ENCODE measurements at regions of chr12 and their contacts with region 1.

Region 1: GRCh38 chr12:15584366-15585041 is 204.7 kb downstream of the EPS8 start:
- DNase-seq: peak; percentile 37
- ATAC-seq: no peak
- H3K4me3 ChIP-seq: no peak overlapping the region
- H3K27ac ChIP-seq: no peak overlapping the region
- H3K4me1 ChIP-seq: peaks cover 18% of the 10 kb centered on the region
- H3K27me3 ChIP-seq: no peaks in the 10 kb centered on the region; a peak in 1 of 5 replicates
- CTCF ChIP-seq: peak; percentile 64
- EP300 ChIP-seq: no peak
- POLR2A ChIP-seq: no peak
- RAD21 ChIP-seq: peak; percentile 24; the same call in 1 of the 2 replicates

Region 2: DNA sequence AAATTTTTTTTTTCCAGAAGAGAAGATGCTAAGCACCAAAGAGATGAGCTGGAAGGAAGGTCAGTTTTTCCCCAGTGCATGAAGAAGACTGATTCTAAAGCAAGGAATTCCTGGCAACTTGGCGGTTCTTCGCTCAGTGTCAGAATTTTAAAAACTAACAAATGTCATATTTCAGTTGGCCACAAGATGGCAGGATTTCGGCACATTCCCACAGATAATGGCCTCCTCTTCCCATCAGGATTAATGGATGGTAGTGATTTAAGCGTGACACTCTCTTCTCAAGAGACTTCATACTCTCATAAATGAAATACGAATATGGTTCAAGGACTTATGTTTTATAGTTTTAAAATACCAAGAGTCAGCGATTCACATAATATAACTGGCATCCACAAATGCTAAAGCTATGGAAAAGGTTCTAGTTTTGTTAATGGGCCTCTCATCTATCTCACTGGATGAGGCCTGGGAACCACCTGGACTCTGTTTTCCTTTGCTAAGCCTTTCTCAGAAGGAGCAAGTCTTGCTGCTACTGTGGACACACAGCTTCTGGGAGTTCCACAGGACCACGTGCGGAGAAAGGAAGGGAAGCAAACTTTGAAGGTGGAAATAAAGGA is 308.3 kb before region 1 on chr12:
- CTCF ChIA-PET with region 1: interaction called, 4 read pairs
- POLR2A ChIA-PET with region 1: no interaction called
- in situ Hi-C with region 1: no loop called
- intact Hi-C with region 1: loop called (anchors 1 kb)
- DNase-seq: peak; percentile 11
- ATAC-seq: peak; percentile 79
- H3K4me3 ChIP-seq: no peak overlapping the region
- H3K27ac ChIP-seq: no peak overlapping the region
- H3K4me1 ChIP-seq: no peaks in the 10 kb centered on the region
- H3K27me3 ChIP-seq: no peaks in the 10 kb centered on the region; a peak in 1 of 5 replicates
- CTCF ChIP-seq: peak; percentile 78
- EP300 ChIP-seq: no peak
- POLR2A ChIP-seq: no peak
- RAD21 ChIP-seq: no peak; the same call in 1 of the 2 replicates

Region 3: GRCh38 chr12:15532364-15532977 is 52.0 kb before region 1 on chr12:
- CTCF ChIA-PET with region 1: interaction called, 7 read pairs
- POLR2A ChIA-PET with region 1: no interaction called
- in situ Hi-C with region 1: no loop called
- intact Hi-C with region 1: loop called (anchors 1 kb)
- DNase-seq: peak; percentile 55
- ATAC-seq: peak; percentile 88
- H3K4me3 ChIP-seq: no peak overlapping the region
- H3K27ac ChIP-seq: no peak overlapping the region
- H3K4me1 ChIP-seq: peaks cover 15% of the 10 kb centered on the region; the same call in 1 of the 2 replicates
- H3K27me3 ChIP-seq: peaks cover 0 to 6% of the 10 kb centered on the region in 2 experiments; a peak in 1 of 5 replicates
- CTCF ChIP-seq: peak; percentile 74
- EP300 ChIP-seq: no peak
- POLR2A ChIP-seq: no peak
- RAD21 ChIP-seq: 0 out of 2 replicates have a peak, but pooled peaks have one; percentile 21

Measured in HepG2 (cell line).